Activated B cell treated with CpG ODN at 0.5 μM for 24 hours (primary cell): ENCODE measurements at regions of chr16 and their contacts with region 1.

Region 1: DNA sequence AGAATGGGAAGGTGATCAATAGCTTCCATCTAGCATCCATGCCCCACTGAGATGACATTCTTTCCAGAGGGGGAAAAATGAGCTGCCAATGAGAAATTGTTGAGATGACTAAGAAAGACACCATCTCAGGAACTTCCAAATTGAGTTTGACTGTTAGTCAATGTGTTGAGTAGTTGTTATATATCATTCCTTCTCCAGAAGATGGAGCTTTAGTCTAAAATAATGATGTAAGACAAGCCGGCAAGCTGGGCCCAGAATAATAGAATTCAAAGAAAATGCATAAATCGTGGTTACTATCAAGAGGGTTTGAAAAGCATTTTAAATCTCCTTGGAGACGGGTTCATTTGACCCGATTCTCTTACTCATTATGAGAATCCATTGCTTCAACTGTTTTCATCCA is 71.0 kb upstream of the ATF7IP2 start:
- DNase-seq: no peak
- ATAC-seq: no peak
- H3K4me3 Mint-ChIP-seq: no peak overlapping the region
- H3K27ac Mint-ChIP-seq: peak overlapping the region; percentile 63
- H3K4me1 Mint-ChIP-seq: peaks cover 22% of the 10 kb centered on the region
- H3K27me3 Mint-ChIP-seq: no peaks in the 10 kb centered on the region
- CTCF ChIP-seq: no peak

Region 2: GRCh38 chr16:10256784-10257641 is 57.8 kb before region 1 on chr16:
- CTCF ChIA-PET with region 1: interaction called, 54 read pairs
- POLR2A ChIA-PET with region 1: interaction called, 16 read pairs
- intact Hi-C with region 1: loop called (anchors 1 kb)
- DNase-seq: peak; percentile 56
- ATAC-seq: peak; percentile 83
- H3K4me3 Mint-ChIP-seq: peak overlapping the region; percentile 71
- H3K27ac Mint-ChIP-seq: peak overlapping the region; percentile 47
- H3K4me1 Mint-ChIP-seq: peaks cover 42% of the 10 kb centered on the region
- H3K27me3 Mint-ChIP-seq: no peaks in the 10 kb centered on the region
- CTCF ChIP-seq: no peak

Region 3: DNA sequence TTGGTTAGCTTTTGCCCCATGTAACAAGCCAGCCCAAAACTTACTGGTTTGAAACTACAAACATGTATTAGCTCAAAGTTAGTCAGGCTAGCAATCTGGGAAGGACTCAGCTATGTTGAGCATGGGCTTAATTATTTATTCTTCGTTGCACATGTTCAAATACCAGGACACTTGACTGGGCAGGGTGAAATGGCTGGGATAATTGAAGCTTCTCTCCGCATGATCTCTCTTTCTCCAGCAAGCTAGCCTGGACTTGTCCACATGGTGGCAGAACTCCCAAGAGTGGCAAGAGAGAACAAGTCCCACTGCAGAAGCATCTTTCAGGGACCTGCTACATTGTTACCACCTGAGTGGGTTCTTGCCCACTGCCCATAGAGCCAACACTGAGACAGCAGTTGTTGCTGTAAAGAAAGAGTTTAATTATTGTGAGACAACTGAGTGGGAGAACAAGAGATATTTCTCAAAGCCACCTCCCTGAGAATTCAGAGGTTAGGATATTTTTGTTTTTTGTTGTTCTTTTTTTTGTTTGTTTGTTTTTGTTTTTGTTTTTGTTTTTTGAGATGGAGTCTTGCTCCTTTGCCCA is 54.2 kb after region 1 on chr16:
- CTCF ChIA-PET with region 1: no interaction called
- POLR2A ChIA-PET with region 1: no interaction called
- intact Hi-C with region 1: no loop called
- DNase-seq: no peak
- ATAC-seq: no peak
- H3K4me3 Mint-ChIP-seq: no peak overlapping the region
- H3K27ac Mint-ChIP-seq: no peak overlapping the region
- H3K4me1 Mint-ChIP-seq: no peaks in the 10 kb centered on the region
- H3K27me3 Mint-ChIP-seq: no peaks in the 10 kb centered on the region
- CTCF ChIP-seq: no peak

Region 4: GRCh38 chr16:11094072-11094856 is 779.5 kb after region 1 on chr16:
- CTCF ChIA-PET with region 1: no interaction called
- POLR2A ChIA-PET with region 1: interaction called, 12 read pairs
- intact Hi-C with region 1: no loop called
- DNase-seq: no peak
- ATAC-seq: peak; percentile 67
- H3K4me3 Mint-ChIP-seq: peak overlapping the region; percentile 68
- H3K27ac Mint-ChIP-seq: peak overlapping the region; percentile 94
- H3K4me1 Mint-ChIP-seq: peaks cover 40% of the 10 kb centered on the region
- H3K27me3 Mint-ChIP-seq: no peaks in the 10 kb centered on the region
- CTCF ChIP-seq: no peak